Activated T-helper 1 cell treated with anti-CD3 and anti-CD28 coated beads, Interleukin-12 subunit alpha, Interleukin-12 subunit beta, Interleukin-2, Interleukin-4 antibody, amounts not matched to agents 30 ng/mL and 10 ng/mL and 1 ng/mL, durations not matched to agents 14 hours and 24 hours and 36 hours (primary cell): ENCODE measurements at regions of chr9 and their contacts with region 1.

Region 1: GRCh38 chr9:77770340-77770739 is 122.2 kb upstream of the GNA14 start:
- DNase-seq: no peak
- H3K4me3 Mint-ChIP-seq: no peak overlapping the region
- H3K27ac Mint-ChIP-seq: no peak overlapping the region
- H3K4me1 Mint-ChIP-seq: peaks cover 6% of the 10 kb centered on the region
- H3K27me3 Mint-ChIP-seq: no peaks in the 10 kb centered on the region

Region 2: DNA sequence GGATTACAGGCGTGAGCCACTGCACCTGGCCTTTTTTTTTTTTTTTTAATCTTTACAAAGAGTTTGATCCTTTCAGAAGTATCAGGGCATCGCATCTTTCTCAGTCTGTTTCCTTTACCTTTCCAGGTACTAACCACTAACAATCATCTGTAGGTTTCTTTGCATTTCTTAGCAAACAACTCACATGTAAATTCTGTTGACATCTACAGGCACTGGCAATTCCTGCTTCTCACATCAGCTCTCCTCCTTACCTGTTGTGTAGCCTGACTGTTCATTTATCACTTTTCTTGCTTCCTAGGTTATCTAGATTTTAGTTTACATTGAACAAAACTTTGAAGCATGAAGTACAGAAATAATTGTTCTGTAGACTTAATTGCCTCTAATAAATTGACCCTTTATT is 620.5 kb before region 1 on chr9:
- intact Hi-C with region 1: no loop called
- DNase-seq: no peak
- H3K4me3 Mint-ChIP-seq: no peak overlapping the region
- H3K27ac Mint-ChIP-seq: no peak overlapping the region
- H3K4me1 Mint-ChIP-seq: no peaks in the 10 kb centered on the region
- H3K27me3 Mint-ChIP-seq: peaks cover 3% of the 10 kb centered on the region

Region 3: GRCh38 chr9:77291714-77292113 is 478.6 kb before region 1 on chr9:
- intact Hi-C with region 1: no loop called
- DNase-seq: no peak
- H3K4me3 Mint-ChIP-seq: no peak overlapping the region
- H3K27ac Mint-ChIP-seq: no peak overlapping the region
- H3K4me1 Mint-ChIP-seq: peaks cover 3% of the 10 kb centered on the region
- H3K27me3 Mint-ChIP-seq: no peaks in the 10 kb centered on the region

Region 4: GRCh38 chr9:77673941-77674791 is 96.2 kb before region 1 on chr9:
- intact Hi-C with region 1: no loop called
- DNase-seq: no peak
- H3K4me3 Mint-ChIP-seq: no peak overlapping the region
- H3K27ac Mint-ChIP-seq: no peak overlapping the region
- H3K4me1 Mint-ChIP-seq: no peaks in the 10 kb centered on the region
- H3K27me3 Mint-ChIP-seq: peaks cover 4% of the 10 kb centered on the region

Region 5: GRCh38 chr9:77751341-77752091 is 18.8 kb before region 1 on chr9:
- intact Hi-C with region 1: no loop called
- DNase-seq: no peak
- H3K4me3 Mint-ChIP-seq: no peak overlapping the region
- H3K27ac Mint-ChIP-seq: no peak overlapping the region
- H3K4me1 Mint-ChIP-seq: peaks cover 26% of the 10 kb centered on the region
- H3K27me3 Mint-ChIP-seq: no peaks in the 10 kb centered on the region

Region 6: DNA sequence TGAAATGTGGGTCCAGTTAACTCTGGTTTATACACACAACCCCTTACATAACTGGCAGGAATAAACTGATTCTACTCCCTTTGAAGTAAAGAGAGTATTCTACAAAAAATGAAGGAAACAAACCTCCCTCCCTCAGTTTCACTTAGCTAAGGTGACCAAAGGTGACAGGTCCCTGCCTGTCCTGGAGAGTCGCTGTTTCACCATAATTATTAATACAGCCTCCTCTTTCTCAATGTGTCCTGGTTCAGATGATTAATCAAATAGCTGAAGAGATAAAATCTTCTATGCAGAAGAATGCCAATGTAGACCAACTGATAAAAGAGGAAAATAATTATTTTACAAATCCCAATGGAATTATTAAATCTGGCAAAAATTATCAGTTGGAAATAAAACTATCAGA is 41.5 kb after region 1 on chr9:
- intact Hi-C with region 1: loop called (anchors 2 kb)
- DNase-seq: no peak
- H3K4me3 Mint-ChIP-seq: no peak overlapping the region
- H3K27ac Mint-ChIP-seq: no peak overlapping the region
- H3K4me1 Mint-ChIP-seq: peaks cover 26% of the 10 kb centered on the region
- H3K27me3 Mint-ChIP-seq: no peaks in the 10 kb centered on the region